Right ventricle myocardium inferior (tissue), 1 donor: ENCODE measurements at regions of chr5 and their contacts with region 1.

Region 1: GRCh38 chr5:10987930-10988504 is 227.0 kb upstream of the DAP start:
- DNase-seq: peak; percentile 86
- ATAC-seq: peak; percentile 82

Region 2: DNA sequence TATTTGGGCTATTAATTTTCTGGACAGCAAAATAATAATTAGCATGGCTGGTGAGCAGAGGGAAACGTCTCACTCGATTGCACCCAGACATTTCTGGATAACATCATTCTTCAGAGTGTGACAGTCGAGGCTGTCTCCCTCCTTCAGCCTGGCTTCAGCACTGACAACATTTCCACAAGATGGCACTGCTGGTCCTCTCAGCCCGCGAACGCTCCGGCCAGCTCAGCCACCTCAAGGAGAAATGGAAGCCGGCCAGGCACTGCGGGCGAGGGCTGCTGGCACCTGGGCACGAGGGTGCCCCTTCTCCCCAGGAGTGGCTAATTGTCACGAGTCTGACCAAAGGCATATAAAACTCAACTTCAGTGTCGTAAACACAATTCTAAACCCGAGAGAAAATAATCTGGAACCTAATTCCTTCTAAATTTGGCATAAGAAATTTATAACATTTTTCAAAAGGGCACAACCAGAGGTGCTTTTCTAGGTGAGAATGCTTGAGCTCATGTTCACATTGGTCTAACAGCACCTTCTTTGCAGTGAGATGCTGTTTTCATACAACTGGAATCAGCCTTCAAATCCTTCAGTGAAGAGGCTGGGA is 292.9 kb before region 1 on chr5:
- intact Hi-C with region 1: loop called (anchors 5 kb)
- DNase-seq: peak; percentile 86
- ATAC-seq: peak; percentile 85

Region 3: DNA sequence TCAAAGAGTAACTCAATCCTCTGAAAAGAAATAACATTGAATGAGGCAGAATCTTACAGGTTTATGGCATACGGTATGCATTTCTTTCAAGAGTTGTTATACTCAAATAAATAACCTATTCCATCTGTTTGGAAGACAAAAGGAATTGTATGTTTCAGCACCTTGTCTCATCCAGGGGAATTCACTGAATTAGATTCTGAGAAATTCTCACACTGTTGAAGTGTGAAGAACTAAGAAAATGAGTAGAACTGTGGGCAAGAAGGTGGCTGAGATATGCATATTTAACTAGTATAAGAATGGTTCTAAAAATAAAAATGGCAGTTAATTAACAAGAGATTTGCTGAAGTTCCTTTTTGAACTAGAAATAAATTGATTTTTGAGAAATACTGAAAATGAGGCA is 52.3 kb after region 1 on chr5:
- intact Hi-C with region 1: loop called (anchors 5 kb)
- DNase-seq: no peak
- ATAC-seq: no peak

Region 4: DNA sequence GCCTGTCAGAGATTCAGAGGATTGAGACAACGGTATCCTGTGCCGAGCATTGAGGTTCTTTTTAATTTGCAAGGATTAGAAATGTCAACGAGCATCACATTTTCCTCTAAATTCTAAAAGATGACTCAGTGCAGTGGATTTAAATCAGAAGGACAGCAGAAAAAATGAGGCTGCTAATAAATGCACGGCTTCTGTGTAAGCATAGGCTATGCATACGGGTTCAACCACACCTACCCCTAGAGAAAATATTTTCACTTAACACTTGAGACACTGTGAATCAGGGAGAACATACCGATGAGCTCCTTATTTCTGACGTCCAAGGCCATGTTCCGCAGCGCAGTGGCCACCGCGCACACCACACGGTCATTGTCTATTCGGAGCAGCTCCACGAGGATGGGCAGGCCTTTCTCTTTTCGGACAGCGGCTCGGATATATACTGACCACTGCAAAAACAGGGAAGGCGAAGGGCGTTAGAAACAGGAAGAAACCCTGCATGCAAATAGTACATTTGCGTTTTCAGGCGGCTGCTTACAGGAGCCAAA is 94.5 kb after region 1 on chr5:
- intact Hi-C with region 1: loop called (anchors 5 kb)
- DNase-seq: no peak
- ATAC-seq: no peak

Region 5: GRCh38 chr5:11182441-11183268 is 194.6 kb after region 1 on chr5:
- intact Hi-C with region 1: loop called (anchors 5 kb)
- DNase-seq: no peak
- ATAC-seq: no peak